IMR-90 (cell line): ENCODE measurements at regions of chr11 and their contacts with region 1.

Region 1: GRCh38 chr11:89327885-89328284 is 150.2 kb downstream of the TYR start:
- DNase-seq: no peak
- ATAC-seq: no peak
- H3K4me3 ChIP-seq: no peak overlapping the region
- H3K27ac ChIP-seq: no peak overlapping the region
- H3K4me1 ChIP-seq: no peaks in the 10 kb centered on the region
- H3K27me3 ChIP-seq: no peaks in the 10 kb centered on the region
- CTCF ChIP-seq: no peak
- POLR2A ChIP-seq: no peak
- RAD21 ChIP-seq: no peak

Region 2: DNA sequence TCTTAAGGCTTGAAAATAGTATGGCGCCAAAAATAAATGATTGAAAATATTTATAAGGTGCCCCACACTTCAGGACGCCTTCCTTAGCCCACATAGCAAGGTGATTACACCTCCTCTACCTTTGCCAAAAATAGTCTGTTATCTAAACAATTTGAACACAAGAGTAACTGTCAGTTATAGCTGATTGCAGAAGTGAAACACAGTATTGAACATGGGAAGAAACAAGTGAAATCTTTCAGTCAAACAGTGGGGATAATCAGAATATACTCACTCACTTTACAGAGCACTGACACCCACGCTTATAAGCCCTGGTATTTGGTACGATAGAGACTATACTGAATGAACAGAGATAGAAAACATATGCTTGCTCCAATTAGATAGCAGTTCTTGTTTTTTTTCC is 1355.8 kb before region 1 on chr11:
- CTCF ChIA-PET with region 1: no interaction called
- POLR2A ChIA-PET with region 1: no interaction called
- dilution Hi-C with region 1: no loop called
- in situ Hi-C with region 1: no loop called
- intact Hi-C with region 1: no loop called
- DNase-seq: no peak
- ATAC-seq: no peak
- H3K4me3 ChIP-seq: no peak overlapping the region
- H3K27ac ChIP-seq: no peak overlapping the region
- H3K4me1 ChIP-seq: no peaks in the 10 kb centered on the region
- H3K27me3 ChIP-seq: no peaks in the 10 kb centered on the region
- CTCF ChIP-seq: no peak
- POLR2A ChIP-seq: no peak
- RAD21 ChIP-seq: no peak

Region 3: DNA sequence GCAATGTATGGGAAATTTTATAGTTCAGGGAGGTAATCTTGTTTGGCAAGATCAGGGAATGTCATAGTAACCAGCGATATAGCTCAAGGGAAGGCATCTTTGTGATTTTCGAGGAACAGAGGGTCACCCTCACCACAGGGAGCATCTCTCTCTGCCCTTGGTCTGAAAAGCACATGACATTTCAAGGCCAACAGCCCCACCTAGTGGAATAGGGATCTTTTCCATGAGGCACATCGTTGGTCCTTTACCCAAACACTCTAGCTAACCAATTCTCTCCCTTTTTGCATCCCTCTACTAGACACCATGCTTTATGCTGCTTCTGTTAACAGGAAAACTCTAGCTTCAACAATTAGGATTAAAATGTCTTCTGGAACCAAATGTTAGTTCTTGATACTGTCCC is 441.1 kb before region 1 on chr11:
- CTCF ChIA-PET with region 1: no interaction called
- POLR2A ChIA-PET with region 1: no interaction called
- dilution Hi-C with region 1: no loop called
- in situ Hi-C with region 1: no loop called
- intact Hi-C with region 1: no loop called
- DNase-seq: peak; percentile 46
- ATAC-seq: peak; percentile 62; the same call in 1 of the 2 replicates
- H3K4me3 ChIP-seq: no peak overlapping the region
- H3K27ac ChIP-seq: no peak overlapping the region
- H3K4me1 ChIP-seq: no peaks in the 10 kb centered on the region
- H3K27me3 ChIP-seq: no peaks in the 10 kb centered on the region
- CTCF ChIP-seq: peak; percentile 57
- POLR2A ChIP-seq: no peak
- RAD21 ChIP-seq: peak; percentile 68

Region 4: DNA sequence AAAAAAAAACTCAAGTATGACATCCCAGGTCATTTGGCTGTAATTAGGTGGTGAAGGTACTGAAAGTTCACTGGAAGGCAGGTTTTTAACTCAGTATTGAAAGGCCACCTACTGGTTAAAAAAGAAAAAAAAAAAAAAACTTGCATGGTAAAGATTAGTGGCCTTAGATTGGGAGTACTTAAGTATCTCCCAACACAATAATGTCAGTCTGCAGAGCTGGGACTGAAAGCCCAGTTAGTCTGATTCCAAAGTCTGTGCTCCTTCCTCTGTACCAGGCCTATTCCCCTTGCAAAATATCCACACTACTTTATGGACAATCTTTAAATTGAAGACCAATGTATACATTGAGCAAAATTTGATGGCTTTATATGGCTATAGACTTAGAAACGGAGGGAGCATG is 77.7 kb after region 1 on chr11:
- CTCF ChIA-PET with region 1: no interaction called
- POLR2A ChIA-PET with region 1: no interaction called
- dilution Hi-C with region 1: no loop called
- in situ Hi-C with region 1: no loop called
- intact Hi-C with region 1: loop called (anchors 10 kb)
- DNase-seq: no peak
- ATAC-seq: no peak
- H3K4me3 ChIP-seq: no peak overlapping the region
- H3K27ac ChIP-seq: no peak overlapping the region
- H3K4me1 ChIP-seq: peaks cover 3% of the 10 kb centered on the region; the same call in 1 of the 2 replicates
- H3K27me3 ChIP-seq: no peaks in the 10 kb centered on the region
- CTCF ChIP-seq: 0 out of 2 replicates have a peak, but pooled peaks have one; percentile 13
- POLR2A ChIP-seq: no peak
- RAD21 ChIP-seq: peak; percentile 15; the same call in 1 of the 2 replicates

Region 5: DNA sequence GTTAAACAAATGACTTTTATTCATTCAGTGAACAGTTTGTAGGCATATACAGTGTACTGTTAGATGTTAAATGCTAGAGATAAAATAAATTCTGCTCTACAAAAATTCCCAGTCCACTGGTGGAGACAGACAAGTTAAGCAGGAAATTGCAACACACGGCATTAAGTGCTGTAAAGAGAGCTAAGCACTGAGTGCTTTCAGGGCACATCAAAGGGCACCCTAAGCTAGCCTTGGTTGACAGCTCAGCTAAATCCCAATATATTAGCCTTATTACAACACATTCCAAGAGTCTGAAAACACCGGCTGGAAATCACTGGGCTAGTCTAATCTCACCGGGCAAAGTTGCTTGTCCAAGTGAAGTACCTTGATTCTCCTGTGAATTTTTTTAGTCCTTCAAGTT is 108.2 kb after region 1 on chr11:
- CTCF ChIA-PET with region 1: no interaction called
- POLR2A ChIA-PET with region 1: no interaction called
- dilution Hi-C with region 1: no loop called
- in situ Hi-C with region 1: no loop called
- intact Hi-C with region 1: no loop called
- DNase-seq: peak; percentile 58
- ATAC-seq: peak; percentile 65
- H3K4me3 ChIP-seq: no peak overlapping the region
- H3K27ac ChIP-seq: no peak overlapping the region
- H3K4me1 ChIP-seq: no peaks in the 10 kb centered on the region
- H3K27me3 ChIP-seq: no peaks in the 10 kb centered on the region
- CTCF ChIP-seq: no peak
- POLR2A ChIP-seq: no peak
- RAD21 ChIP-seq: no peak

Region 6: GRCh38 chr11:89613911-89614310 is 286.0 kb after region 1 on chr11:
- CTCF ChIA-PET with region 1: no interaction called
- POLR2A ChIA-PET with region 1: no interaction called
- dilution Hi-C with region 1: no loop called
- in situ Hi-C with region 1: loop called (anchors 10 kb)
- intact Hi-C with region 1: loop called (anchors 2 kb)
- DNase-seq: no peak
- ATAC-seq: no peak
- H3K4me3 ChIP-seq: no peak overlapping the region
- H3K27ac ChIP-seq: no peak overlapping the region
- H3K4me1 ChIP-seq: no peaks in the 10 kb centered on the region
- H3K27me3 ChIP-seq: no peaks in the 10 kb centered on the region
- CTCF ChIP-seq: no peak
- POLR2A ChIP-seq: no peak
- RAD21 ChIP-seq: no peak